Heart right ventricle (tissue), 16 donors: ENCODE measurements at regions of chr14 and their contacts with region 1.

Region 1: GRCh38 chr14:96362965-96363756 is at the starts of genes ATG2B and GSKIP:
- DNase-seq: peak; percentile 94 to 97
- ATAC-seq: peak; percentile 99
- H3K4me3 ChIP-seq: peak within 1 kb of the TSS; percentile 78 to 100 (median 96)
- H3K27ac ChIP-seq: peak within 1 kb of the TSS; percentile 20 to 97 (median 92)
- H3K4me1 ChIP-seq: peaks cover 0 to 47% (median 35%) of the 10 kb centered on the region in 9 donors
- H3K27me3 ChIP-seq: no peaks in the 10 kb centered on the region
- CTCF ChIP-seq: no peak
- total RNA-seq, gene ATG2B: 11.0 to 20.2 (median 14.5) TPM
- total RNA-seq, gene GSKIP: 10.2 to 18.8 (median 12.2) TPM

Region 2: DNA sequence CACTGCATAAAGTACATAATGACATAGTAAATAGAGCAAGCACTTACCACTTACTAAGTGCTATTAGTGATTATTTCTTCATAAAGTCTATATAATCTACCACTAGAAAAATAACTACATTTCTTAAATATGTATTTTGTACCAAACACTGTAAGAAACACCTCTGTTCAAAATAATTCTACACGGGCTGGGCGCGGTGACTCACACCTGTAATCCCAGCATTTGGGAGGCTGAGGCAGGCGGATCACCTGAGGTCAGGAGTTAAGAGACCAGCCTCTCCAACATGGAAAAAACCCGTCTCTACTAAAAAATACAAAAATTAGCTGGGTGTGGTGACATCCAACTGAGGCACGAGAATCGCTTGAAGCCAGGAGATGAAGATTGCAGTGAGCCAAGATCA is 38.9 kb before region 1 on chr14:
- intact Hi-C with region 1: no loop called
- DNase-seq: no peak
- ATAC-seq: no peak
- H3K4me3 ChIP-seq: no peak overlapping the region
- H3K27ac ChIP-seq: no peak overlapping the region
- H3K4me1 ChIP-seq: no peaks in the 10 kb centered on the region
- H3K27me3 ChIP-seq: no peaks in the 10 kb centered on the region
- CTCF ChIP-seq: no peak

Region 3: DNA sequence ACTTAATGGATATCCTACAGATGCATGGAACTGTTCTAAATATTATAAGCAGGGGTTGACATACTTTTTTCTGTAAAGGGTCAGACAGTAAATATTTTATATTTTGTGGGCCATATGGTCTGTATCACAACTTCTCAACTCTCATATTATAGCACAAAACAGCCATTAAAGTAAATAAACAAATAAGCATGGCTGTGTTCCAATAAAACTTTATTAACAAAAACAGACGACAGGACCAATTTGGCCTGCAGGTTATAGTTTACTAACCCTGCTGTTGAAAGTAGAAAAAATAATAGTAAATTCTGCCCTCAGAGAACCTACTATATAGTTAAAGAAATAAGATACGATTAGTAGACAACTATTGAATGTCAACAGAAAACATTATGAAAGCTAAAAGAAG is 17.5 kb before region 1 on chr14:
- intact Hi-C with region 1: loop called in 1 of 10 experiments (anchors 1 kb)
- DNase-seq: no peak
- ATAC-seq: no peak
- H3K4me3 ChIP-seq: no peak overlapping the region
- H3K27ac ChIP-seq: no peak overlapping the region
- H3K4me1 ChIP-seq: peaks cover 0 to 10% (median 0%) of the 10 kb centered on the region in 9 donors
- H3K27me3 ChIP-seq: no peaks in the 10 kb centered on the region
- CTCF ChIP-seq: no peak

Region 4: DNA sequence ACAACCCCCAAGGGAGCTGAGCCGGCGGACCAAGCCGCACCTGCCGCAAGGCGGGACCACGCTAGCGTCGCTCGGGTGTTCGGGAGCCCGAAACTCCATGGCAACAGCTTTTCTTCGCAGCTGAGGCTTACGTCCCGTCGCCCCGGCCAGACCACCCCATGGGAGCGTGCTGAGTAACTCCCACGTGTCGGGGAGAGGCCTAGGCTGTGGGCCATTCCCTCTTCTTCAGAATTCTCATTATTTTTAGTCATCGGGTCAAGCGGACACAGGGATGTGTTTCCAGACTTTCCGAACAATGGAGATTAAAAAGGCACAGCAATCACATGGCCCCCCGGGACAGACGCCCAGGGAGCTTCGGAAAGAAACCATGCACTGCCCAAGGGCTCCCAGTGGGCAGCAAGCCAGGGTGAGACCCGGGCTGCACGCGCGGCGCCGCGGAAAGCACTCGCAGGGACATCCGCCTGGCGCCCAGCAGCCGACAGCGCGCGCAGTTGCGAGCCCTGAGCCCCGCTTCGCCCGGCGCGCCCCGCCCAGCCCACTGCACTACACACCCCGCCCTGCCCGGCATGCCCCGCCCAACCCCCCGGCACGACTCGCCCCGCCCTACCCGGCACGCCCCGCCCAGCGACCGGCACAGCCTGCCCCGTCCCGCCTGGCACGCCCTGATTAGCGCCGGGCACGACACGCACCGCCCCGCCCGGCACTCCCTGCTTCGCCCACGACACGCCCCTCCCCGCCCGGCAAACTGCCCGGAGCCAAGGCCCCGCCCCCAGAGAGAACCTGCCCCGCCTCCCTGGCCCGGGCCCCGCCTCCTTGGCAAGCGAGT is 28.3 kb after region 1 on chr14:
- intact Hi-C with region 1: loop called in 3 of 10 experiments (anchors 1 to 2 kb)
- DNase-seq: peak; percentile 94 to 98
- ATAC-seq: peak; percentile 96 to 100 (median 98)
- H3K4me3 ChIP-seq: peak overlapping the region; percentile 48 to 87 (median 76)
- H3K27ac ChIP-seq: peak overlapping the region in 9 of 10 donors; percentile 36 to 75 (median 61)
- H3K4me1 ChIP-seq: peaks cover 0 to 20% (median 13%) of the 10 kb centered on the region in 9 donors
- H3K27me3 ChIP-seq: peaks cover 0 to 20% (median 0%) of the 10 kb centered on the region in 7 donors
- CTCF ChIP-seq: no peak

Region 5: GRCh38 chr14:96501742-96502617 is 138.8 kb after region 1 on chr14 and contains the start of gene PAPOLA:
- intact Hi-C with region 1: loop called in 2 of 10 experiments (anchors 5 to 10 kb)
- DNase-seq: peak; percentile 93 to 95
- ATAC-seq: peak; percentile 98 to 99 (median 98)
- H3K4me3 ChIP-seq: peak within 1 kb of the TSS; percentile 78 to 98 (median 86)
- H3K27ac ChIP-seq: peak within 1 kb of the TSS; percentile 90 to 99 (median 96)
- H3K4me1 ChIP-seq: peaks cover 7 to 49% (median 41%) of the 10 kb centered on the region in 9 donors
- H3K27me3 ChIP-seq: no peaks in the 10 kb centered on the region
- CTCF ChIP-seq: peak in 4 of 9 donors; percentile 20 to 47 (median 26)
- total RNA-seq, gene PAPOLA: 95.9 to 159 (median 114) TPM